ENCODE measurements at regions of chr14 and their contacts with region 1.

Region 1: GRCh38 chr14:35326096-35326774 is 34.1 kb downstream of the PSMA6 start:
- DNase-seq: no peak
- H3K4me3 ChIP-seq: no peak overlapping the region
- H3K4me3 Mint-ChIP-seq: no peak overlapping the region
- H3K27ac ChIP-seq: no peak overlapping the region
- H3K27ac Mint-ChIP-seq: peak overlapping the region in 1 of 8 donors; percentile 37
- H3K4me1 ChIP-seq: no peaks in the 10 kb centered on the region
- H3K4me1 Mint-ChIP-seq: no peaks in the 10 kb centered on the region
- H3K27me3 ChIP-seq: no peaks in the 10 kb centered on the region
- H3K27me3 Mint-ChIP-seq: no peaks in the 10 kb centered on the region

Region 2: DNA sequence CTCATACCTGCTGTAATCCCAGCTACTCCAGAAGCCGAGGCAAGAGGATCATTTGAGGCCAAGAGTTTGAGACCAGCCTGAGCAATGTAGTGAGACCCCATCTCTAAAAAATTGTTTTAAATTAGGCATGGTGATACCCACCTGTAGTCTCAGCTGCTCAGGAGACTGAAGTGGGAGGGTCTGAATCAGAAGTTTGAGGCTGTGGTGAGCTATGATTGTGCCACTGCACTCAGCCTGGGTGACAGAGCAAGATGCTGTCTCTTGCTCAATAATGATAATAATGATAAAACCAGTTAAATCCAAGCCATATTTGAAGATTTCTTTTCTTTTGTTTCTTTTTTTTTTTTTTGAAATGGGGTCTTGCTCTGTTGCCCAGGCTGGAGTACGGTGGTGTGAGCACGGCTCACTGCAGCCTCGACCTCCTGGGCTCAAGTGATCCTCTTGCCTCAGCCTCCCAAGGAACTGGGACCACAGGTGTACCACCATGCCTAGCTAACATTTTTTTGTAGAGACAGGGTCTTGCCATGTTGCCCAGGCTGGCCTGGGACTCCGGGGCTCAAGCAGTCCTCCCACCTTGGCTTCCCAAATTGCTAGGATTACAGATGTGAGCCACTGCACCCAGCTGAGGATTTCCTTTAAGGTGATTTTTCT is 21.3 kb before region 1 on chr14:
- CTCF ChIA-PET with region 1: no interaction called
- POLR2A ChIA-PET with region 1: interaction called, 12 read pairs
- DNase-seq: no peak
- H3K4me3 ChIP-seq: no peak overlapping the region
- H3K4me3 Mint-ChIP-seq: no peak overlapping the region
- H3K27ac ChIP-seq: no peak overlapping the region
- H3K27ac Mint-ChIP-seq: no peak overlapping the region
- H3K4me1 ChIP-seq: peaks cover 45% of the 10 kb centered on the region
- H3K4me1 Mint-ChIP-seq: peaks cover 40 to 60% (median 48%) of the 10 kb centered on the region in 3 donors
- H3K27me3 ChIP-seq: no peaks in the 10 kb centered on the region
- H3K27me3 Mint-ChIP-seq: no peaks in the 10 kb centered on the region